Activated T-helper 1 cell treated with anti-CD3 and anti-CD28 coated beads, Interleukin-12 subunit alpha, Interleukin-12 subunit beta, Interleukin-2, Interleukin-4 antibody, amounts not matched to agents 30 ng/mL and 10 ng/mL and 1 ng/mL, durations not matched to agents 14 hours and 24 hours and 36 hours (primary cell): ENCODE measurements at regions of chr1 and their contacts with region 1.

Region 1: GRCh38 chr1:41950820-41951219 is 32.1 kb upstream of the HIVEP3 start:
- DNase-seq: no peak
- H3K4me3 Mint-ChIP-seq: no peak overlapping the region
- H3K27ac Mint-ChIP-seq: peak overlapping the region; percentile 62
- H3K4me1 Mint-ChIP-seq: peaks cover 29% of the 10 kb centered on the region
- H3K27me3 Mint-ChIP-seq: no peaks in the 10 kb centered on the region

Region 2: GRCh38 chr1:41936118-41936517 is 14.7 kb before region 1 on chr1:
- intact Hi-C with region 1: loop called (anchors 2 kb)
- DNase-seq: no peak
- H3K4me3 Mint-ChIP-seq: no peak overlapping the region
- H3K27ac Mint-ChIP-seq: no peak overlapping the region
- H3K4me1 Mint-ChIP-seq: peaks cover 27% of the 10 kb centered on the region
- H3K27me3 Mint-ChIP-seq: peaks cover 19% of the 10 kb centered on the region

Region 3: GRCh38 chr1:42017259-42017658 is 66.4 kb after region 1 on chr1:
- intact Hi-C with region 1: loop called (anchors 2 kb)
- DNase-seq: no peak
- H3K4me3 Mint-ChIP-seq: no peak overlapping the region
- H3K27ac Mint-ChIP-seq: no peak overlapping the region
- H3K4me1 Mint-ChIP-seq: peaks cover 42% of the 10 kb centered on the region
- H3K27me3 Mint-ChIP-seq: no peaks in the 10 kb centered on the region

Region 4: GRCh38 chr1:42070996-42071395 is 120.2 kb after region 1 on chr1:
- intact Hi-C with region 1: no loop called
- DNase-seq: no peak
- H3K4me3 Mint-ChIP-seq: no peak overlapping the region
- H3K27ac Mint-ChIP-seq: no peak overlapping the region
- H3K4me1 Mint-ChIP-seq: no peaks in the 10 kb centered on the region
- H3K27me3 Mint-ChIP-seq: peaks cover 67% of the 10 kb centered on the region